ENCODE measurements at regions of chr13 and their contacts with region 1.

Region 1: DNA sequence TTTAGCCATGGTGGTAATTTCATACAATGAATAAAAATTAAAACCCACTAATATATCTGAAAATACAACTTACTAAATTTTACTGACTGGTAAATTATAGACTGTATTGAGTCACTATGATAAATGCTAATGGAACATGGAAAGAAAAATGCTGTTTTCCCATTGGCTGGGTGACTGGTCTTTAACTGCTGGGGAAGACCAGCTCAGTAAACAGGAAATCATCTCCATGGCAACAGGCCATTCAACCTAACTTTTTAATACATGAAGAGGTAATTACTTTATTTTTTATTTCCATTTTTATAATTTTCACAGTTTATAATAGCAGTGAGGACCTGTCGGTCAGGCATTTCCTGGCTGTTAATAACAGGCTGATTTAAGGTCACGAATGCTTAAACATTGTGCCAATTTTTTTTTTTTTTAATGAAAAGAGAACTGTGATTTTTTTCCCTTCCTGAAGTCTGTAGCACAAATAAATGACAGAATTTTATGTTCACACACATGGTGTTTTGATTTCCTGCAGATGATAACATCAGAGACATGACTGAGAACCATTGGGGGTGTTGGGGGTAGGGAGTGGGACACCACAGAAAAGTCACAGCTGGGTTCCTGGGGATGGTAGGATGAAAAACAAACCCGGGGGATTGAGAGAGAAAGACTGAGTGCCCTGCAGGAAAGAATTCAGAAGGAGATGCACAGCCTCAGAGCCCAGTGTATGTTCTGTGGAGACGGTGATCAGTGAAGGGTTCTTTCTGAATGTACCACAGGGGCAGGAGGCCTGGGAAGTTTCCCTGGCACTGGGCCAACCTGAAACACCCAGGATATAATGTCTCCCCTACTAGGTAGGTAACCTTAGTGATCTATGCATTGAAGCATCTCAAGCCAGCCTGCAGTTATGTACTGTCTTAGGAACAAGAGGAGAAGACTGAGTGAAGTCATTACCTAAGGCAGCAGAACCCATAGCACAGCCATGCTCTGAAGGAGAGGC is 297.1 kb downstream of the COG6 start:
- DNase-seq: peak; percentile 97
- H3K4me3 ChIP-seq: no peak overlapping the region
- H3K27ac ChIP-seq: peak overlapping the region; percentile 88
- H3K4me1 ChIP-seq: peaks cover 24% of the 10 kb centered on the region
- H3K27me3 ChIP-seq: no peaks in the 10 kb centered on the region
- CTCF ChIP-seq: no peak
- POLR2A ChIP-seq: no peak

Region 2: DNA sequence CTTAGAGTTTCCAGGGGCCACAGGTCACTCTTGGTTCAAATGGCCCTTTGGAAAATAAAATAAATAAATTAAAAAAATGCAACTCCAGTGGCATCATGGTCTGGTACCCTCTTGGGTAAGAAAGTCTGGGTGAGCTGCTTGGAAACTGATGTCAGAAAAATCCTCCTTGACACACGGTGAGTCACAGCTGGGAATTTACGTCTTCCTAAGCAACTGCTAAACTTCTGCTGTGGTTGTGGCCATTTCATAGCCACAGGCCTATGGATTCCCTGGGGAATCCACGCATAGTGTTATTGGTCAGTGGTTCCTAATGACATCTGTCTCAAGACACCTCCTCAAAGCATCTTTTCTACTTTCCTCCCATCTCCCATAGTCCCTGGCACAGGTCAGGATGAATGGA is 76.3 kb before region 1 on chr13:
- CTCF ChIA-PET with region 1: no interaction called
- POLR2A ChIA-PET with region 1: interaction called, 3 read pairs
- dilution Hi-C with region 1: no loop called
- intact Hi-C with region 1: loop called (anchors 1 kb)
- DNase-seq: peak; percentile 90
- H3K4me3 ChIP-seq: no peak overlapping the region
- H3K27ac ChIP-seq: peak overlapping the region; percentile 98
- H3K4me1 ChIP-seq: peaks cover 67% of the 10 kb centered on the region
- H3K27me3 ChIP-seq: no peaks in the 10 kb centered on the region
- CTCF ChIP-seq: no peak
- POLR2A ChIP-seq: peak; percentile 25

Region 3: GRCh38 chr13:40031031-40031430 is 78.5 kb after region 1 on chr13:
- CTCF ChIA-PET with region 1: interaction called, 3 read pairs
- POLR2A ChIA-PET with region 1: no interaction called
- dilution Hi-C with region 1: no loop called
- intact Hi-C with region 1: loop called (anchors 1 kb)
- DNase-seq: peak; percentile 84
- H3K4me3 ChIP-seq: no peak overlapping the region
- H3K27ac ChIP-seq: peak overlapping the region; percentile 95
- H3K4me1 ChIP-seq: peaks cover 19% of the 10 kb centered on the region
- H3K27me3 ChIP-seq: no peaks in the 10 kb centered on the region
- CTCF ChIP-seq: no peak
- POLR2A ChIP-seq: no peak

Region 4: GRCh38 chr13:40042991-40043390 is 90.5 kb after region 1 on chr13:
- CTCF ChIA-PET with region 1: no interaction called
- POLR2A ChIA-PET with region 1: no interaction called
- dilution Hi-C with region 1: no loop called
- intact Hi-C with region 1: no loop called
- DNase-seq: no peak
- H3K4me3 ChIP-seq: no peak overlapping the region
- H3K27ac ChIP-seq: no peak overlapping the region
- H3K4me1 ChIP-seq: no peaks in the 10 kb centered on the region
- H3K27me3 ChIP-seq: no peaks in the 10 kb centered on the region
- CTCF ChIP-seq: no peak
- POLR2A ChIP-seq: no peak

Region 5: GRCh38 chr13:40116008-40116407 is 163.5 kb after region 1 on chr13:
- CTCF ChIA-PET with region 1: interaction called, 3 read pairs
- POLR2A ChIA-PET with region 1: no interaction called
- dilution Hi-C with region 1: no loop called
- intact Hi-C with region 1: loop called (anchors 1 kb)
- DNase-seq: peak; percentile 98
- H3K4me3 ChIP-seq: no peak overlapping the region
- H3K27ac ChIP-seq: peak overlapping the region; percentile 93
- H3K4me1 ChIP-seq: peaks cover 17% of the 10 kb centered on the region
- H3K27me3 ChIP-seq: no peaks in the 10 kb centered on the region
- CTCF ChIP-seq: no peak
- POLR2A ChIP-seq: no peak

Region 6: GRCh38 chr13:40540328-40541044 is 587.9 kb after region 1 on chr13:
- CTCF ChIA-PET with region 1: no interaction called
- POLR2A ChIA-PET with region 1: no interaction called
- dilution Hi-C with region 1: no loop called
- intact Hi-C with region 1: loop called (anchors 5 kb)
- DNase-seq: peak; percentile 96
- H3K4me3 ChIP-seq: no peak overlapping the region
- H3K27ac ChIP-seq: peak overlapping the region; percentile 80
- H3K4me1 ChIP-seq: peaks cover 18% of the 10 kb centered on the region
- H3K27me3 ChIP-seq: no peaks in the 10 kb centered on the region
- CTCF ChIP-seq: no peak
- POLR2A ChIP-seq: no peak